Activated naive CD4-positive, alpha-beta T cell treated with anti-CD3 and anti-CD28 coated beads for 36 hours (primary cell): ENCODE measurements at regions of chr6 and their contacts with region 1.

Region 1: DNA sequence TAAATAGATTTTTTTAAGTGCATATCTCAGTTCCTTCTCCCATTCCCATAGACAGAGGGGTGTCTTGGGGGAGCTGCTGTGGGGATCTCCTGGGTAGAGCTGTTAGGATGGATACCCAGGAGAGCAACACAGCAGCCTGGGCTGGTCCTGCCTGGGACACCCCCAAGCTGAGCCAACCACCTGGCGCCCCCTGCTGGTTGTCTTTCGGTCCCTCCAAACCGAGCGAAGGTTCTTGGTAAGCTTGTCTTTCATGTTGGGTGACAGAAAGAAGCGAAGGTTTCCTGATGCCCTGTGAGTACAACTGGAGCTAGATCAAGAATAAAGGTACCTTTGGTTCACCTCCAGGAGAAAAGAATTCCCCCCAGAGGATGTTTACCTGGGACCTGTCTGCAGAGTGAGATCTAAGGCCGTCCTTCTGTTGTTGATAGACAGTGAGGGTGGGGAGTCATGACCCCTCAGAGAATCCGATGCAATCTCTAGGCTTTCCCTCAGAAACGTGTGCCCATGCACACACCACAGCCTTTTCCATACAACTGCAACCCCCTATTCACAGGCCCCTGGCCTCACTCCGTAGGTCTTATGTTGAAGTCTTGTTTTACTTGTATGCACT is 50.8 kb downstream of the SNX9 start:
- DNase-seq: peak; percentile 96
- H3K4me3 Mint-ChIP-seq: no peak overlapping the region
- H3K27ac Mint-ChIP-seq: peak overlapping the region; percentile 67
- H3K4me1 Mint-ChIP-seq: peaks cover 46% of the 10 kb centered on the region
- H3K27me3 Mint-ChIP-seq: no peaks in the 10 kb centered on the region

Region 2: GRCh38 chr6:157756708-157757429 is 117.0 kb before region 1 on chr6:
- CTCF ChIA-PET with region 1: interaction called, 142 read pairs
- intact Hi-C with region 1: loop called (anchors 1 kb)
- DNase-seq: peak; percentile 94
- H3K4me3 Mint-ChIP-seq: peak overlapping the region; percentile 28
- H3K27ac Mint-ChIP-seq: peak overlapping the region; percentile 89
- H3K4me1 Mint-ChIP-seq: peaks cover 93% of the 10 kb centered on the region
- H3K27me3 Mint-ChIP-seq: no peaks in the 10 kb centered on the region

Region 3: GRCh38 chr6:157806856-157807215 is 67.0 kb before region 1 on chr6:
- CTCF ChIA-PET with region 1: interaction called, 11 read pairs
- intact Hi-C with region 1: no loop called
- DNase-seq: no peak
- H3K4me3 Mint-ChIP-seq: no peak overlapping the region
- H3K27ac Mint-ChIP-seq: peak overlapping the region; percentile 10
- H3K4me1 Mint-ChIP-seq: peaks cover 32% of the 10 kb centered on the region
- H3K27me3 Mint-ChIP-seq: no peaks in the 10 kb centered on the region

Region 4: GRCh38 chr6:157823528-157824370 is 50.1 kb before region 1 on chr6:
- CTCF ChIA-PET with region 1: interaction called, 7 read pairs
- intact Hi-C with region 1: loop called (anchors 1 kb)
- DNase-seq: peak; percentile 96
- H3K4me3 Mint-ChIP-seq: peak overlapping the region; percentile 80
- H3K27ac Mint-ChIP-seq: peak overlapping the region; percentile 96
- H3K4me1 Mint-ChIP-seq: peaks cover 42% of the 10 kb centered on the region
- H3K27me3 Mint-ChIP-seq: peaks cover 4% of the 10 kb centered on the region

Region 5: GRCh38 chr6:157830354-157831017 is 43.4 kb before region 1 on chr6:
- CTCF ChIA-PET with region 1: interaction called, 12 read pairs
- intact Hi-C with region 1: no loop called
- DNase-seq: no peak
- H3K4me3 Mint-ChIP-seq: peak overlapping the region; percentile 34
- H3K27ac Mint-ChIP-seq: peak overlapping the region; percentile 54
- H3K4me1 Mint-ChIP-seq: peaks cover 71% of the 10 kb centered on the region
- H3K27me3 Mint-ChIP-seq: no peaks in the 10 kb centered on the region

Region 6: GRCh38 chr6:157861814-157862213 is 12.0 kb before region 1 on chr6:
- CTCF ChIA-PET with region 1: interaction called, 15 read pairs
- intact Hi-C with region 1: loop called (anchors 2 kb)
- DNase-seq: no peak
- H3K4me3 Mint-ChIP-seq: no peak overlapping the region
- H3K27ac Mint-ChIP-seq: no peak overlapping the region
- H3K4me1 Mint-ChIP-seq: peaks cover 78% of the 10 kb centered on the region
- H3K27me3 Mint-ChIP-seq: no peaks in the 10 kb centered on the region

Region 7: DNA sequence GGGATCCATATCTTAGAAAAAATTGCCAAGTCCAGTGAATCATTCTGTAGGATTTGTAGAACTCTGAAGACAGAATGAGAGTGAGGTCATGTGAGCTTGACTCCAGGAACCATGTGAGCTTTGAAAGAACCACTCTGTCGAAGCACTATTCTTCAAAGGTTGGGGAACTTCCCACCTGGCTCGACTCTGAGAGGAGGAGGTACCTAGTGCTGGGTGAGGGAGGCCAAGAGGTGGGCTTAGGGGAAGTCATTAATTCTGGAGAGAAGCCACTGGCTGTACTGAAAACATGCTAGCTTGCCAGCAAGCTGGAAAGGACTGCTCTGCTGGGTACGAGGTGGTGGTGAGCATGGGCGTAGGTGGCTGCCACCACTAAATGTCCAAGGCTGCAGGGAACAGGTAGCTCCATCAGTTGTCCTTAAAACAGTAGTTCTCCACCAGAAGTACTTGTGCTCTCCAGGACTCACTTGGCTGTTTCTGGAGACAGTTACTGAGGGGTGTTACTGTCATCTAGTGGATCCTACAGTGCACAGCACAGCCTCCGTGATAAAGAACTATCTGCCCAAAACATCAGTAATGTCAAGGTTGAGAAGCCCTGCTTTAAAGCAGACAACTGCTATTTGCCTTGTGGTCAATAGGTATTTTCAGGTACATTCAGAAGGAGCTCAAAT is 73.2 kb after region 1 on chr6:
- CTCF ChIA-PET with region 1: interaction called, 10 read pairs
- intact Hi-C with region 1: no loop called
- DNase-seq: peak; percentile 57
- H3K4me3 Mint-ChIP-seq: no peak overlapping the region
- H3K27ac Mint-ChIP-seq: no peak overlapping the region
- H3K4me1 Mint-ChIP-seq: peaks cover 30% of the 10 kb centered on the region
- H3K27me3 Mint-ChIP-seq: no peaks in the 10 kb centered on the region

Region 8: GRCh38 chr6:158018851-158019361 is 145.1 kb after region 1 on chr6:
- CTCF ChIA-PET with region 1: no interaction called
- intact Hi-C with region 1: no loop called
- DNase-seq: no peak
- H3K4me3 Mint-ChIP-seq: no peak overlapping the region
- H3K27ac Mint-ChIP-seq: no peak overlapping the region
- H3K4me1 Mint-ChIP-seq: peaks cover 22% of the 10 kb centered on the region
- H3K27me3 Mint-ChIP-seq: no peaks in the 10 kb centered on the region

Region 9: GRCh38 chr6:158255275-158255988 is 381.6 kb after region 1 on chr6:
- CTCF ChIA-PET with region 1: no interaction called
- intact Hi-C with region 1: no loop called
- DNase-seq: peak; percentile 14
- H3K4me3 Mint-ChIP-seq: no peak overlapping the region
- H3K27ac Mint-ChIP-seq: no peak overlapping the region
- H3K4me1 Mint-ChIP-seq: peaks cover 28% of the 10 kb centered on the region
- H3K27me3 Mint-ChIP-seq: no peaks in the 10 kb centered on the region

Region 10: GRCh38 chr6:158536084-158536890 is 662.4 kb after region 1 on chr6:
- CTCF ChIA-PET with region 1: no interaction called
- intact Hi-C with region 1: no loop called
- DNase-seq: peak; percentile 77
- H3K4me3 Mint-ChIP-seq: peak overlapping the region; percentile 56
- H3K27ac Mint-ChIP-seq: no peak overlapping the region
- H3K4me1 Mint-ChIP-seq: no peaks in the 10 kb centered on the region
- H3K27me3 Mint-ChIP-seq: peaks cover 38% of the 10 kb centered on the region